Activated CD4-positive, alpha-beta memory T cell treated with anti-CD3 and anti-CD28 coated beads, Interleukin-2, amount 10 ng/mL, durations not matched to agents 7 days and 5 days (primary cell): ENCODE measurements at regions of chr6 and their contacts with region 1.

Region 1: DNA sequence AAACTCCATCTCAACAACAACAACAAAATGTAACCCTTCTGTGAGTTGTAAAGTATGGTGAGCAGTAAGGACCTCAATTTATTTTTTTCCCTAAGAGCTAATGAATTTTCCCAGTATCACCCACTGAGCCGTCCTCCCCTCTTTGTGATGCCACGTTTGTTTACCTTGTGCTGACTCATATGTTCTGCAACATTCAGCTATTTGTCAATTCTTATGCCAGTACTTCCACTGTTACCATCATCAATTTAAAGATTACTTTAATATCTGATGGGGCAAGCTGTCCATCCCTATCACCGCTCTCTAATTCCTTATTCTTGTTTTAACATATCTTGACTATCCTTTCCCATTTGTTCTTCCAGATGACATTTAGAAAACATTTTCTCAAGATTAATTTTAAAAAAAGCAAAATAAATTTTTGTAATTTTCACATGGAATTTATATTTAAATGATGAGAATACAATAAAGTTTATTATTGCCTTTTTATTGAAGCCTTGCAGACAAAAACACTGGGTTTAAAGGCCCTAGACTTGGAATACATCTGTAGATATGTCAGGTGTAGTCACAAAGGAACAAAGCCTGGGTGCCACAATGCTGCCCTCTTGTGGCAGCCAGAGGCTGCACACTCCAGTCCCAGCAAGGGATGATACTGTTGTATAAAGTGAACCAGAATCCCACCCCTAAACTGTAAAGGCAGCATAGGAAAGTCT is 37.4 kb downstream of the MAK start:
- DNase-seq: peak; percentile 72
- H3K4me3 Mint-ChIP-seq: no peak overlapping the region
- H3K27ac Mint-ChIP-seq: no peak overlapping the region
- H3K4me1 Mint-ChIP-seq: peaks cover 3% of the 10 kb centered on the region
- H3K27me3 Mint-ChIP-seq: no peaks in the 10 kb centered on the region

Region 2: DNA sequence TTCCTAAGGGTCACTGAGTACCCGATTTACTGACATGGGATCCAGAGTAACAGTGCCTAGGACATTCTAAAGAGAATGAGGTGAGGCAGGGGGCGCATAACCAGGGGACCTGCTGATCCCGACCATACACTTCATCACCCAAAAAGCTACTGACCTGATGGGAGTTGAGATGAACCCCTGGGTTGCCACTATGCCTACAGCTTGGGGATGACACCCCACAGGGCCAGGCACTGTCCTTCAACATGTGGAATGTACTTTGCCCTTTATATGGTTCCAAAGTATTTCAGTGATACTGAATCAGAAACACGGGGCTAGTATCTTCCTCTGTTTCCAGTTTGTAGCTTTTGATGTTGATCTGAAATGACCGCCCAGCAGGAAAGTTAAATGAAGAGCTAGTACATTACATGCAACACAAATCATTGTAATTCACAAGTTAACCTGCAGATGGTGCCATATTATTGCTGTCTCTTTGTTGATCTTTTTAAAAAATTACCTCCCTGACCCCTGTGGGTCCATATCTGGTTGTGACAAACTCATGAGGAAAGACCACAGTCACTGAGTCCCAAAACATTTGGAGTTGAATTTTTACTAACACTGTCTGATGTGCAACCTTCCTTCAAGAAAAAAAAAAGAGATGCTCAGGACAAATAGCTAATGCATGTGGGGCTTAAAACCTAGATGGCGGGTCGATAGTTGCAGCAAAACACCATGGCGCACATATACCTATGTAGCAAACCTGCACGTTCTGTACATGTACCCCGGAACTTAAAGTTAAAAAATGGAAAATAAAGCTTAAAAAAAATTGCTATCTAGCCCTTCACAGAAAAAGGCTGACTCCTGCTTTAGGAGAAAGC is 322.6 kb before region 1 on chr6:
- CTCF ChIA-PET with region 1: interaction called, 46 read pairs
- POLR2A ChIA-PET with region 1: no interaction called
- DNase-seq: no peak
- H3K4me3 Mint-ChIP-seq: no peak overlapping the region
- H3K27ac Mint-ChIP-seq: no peak overlapping the region
- H3K4me1 Mint-ChIP-seq: peaks cover 3% of the 10 kb centered on the region
- H3K27me3 Mint-ChIP-seq: peaks cover 10% of the 10 kb centered on the region

Region 3: DNA sequence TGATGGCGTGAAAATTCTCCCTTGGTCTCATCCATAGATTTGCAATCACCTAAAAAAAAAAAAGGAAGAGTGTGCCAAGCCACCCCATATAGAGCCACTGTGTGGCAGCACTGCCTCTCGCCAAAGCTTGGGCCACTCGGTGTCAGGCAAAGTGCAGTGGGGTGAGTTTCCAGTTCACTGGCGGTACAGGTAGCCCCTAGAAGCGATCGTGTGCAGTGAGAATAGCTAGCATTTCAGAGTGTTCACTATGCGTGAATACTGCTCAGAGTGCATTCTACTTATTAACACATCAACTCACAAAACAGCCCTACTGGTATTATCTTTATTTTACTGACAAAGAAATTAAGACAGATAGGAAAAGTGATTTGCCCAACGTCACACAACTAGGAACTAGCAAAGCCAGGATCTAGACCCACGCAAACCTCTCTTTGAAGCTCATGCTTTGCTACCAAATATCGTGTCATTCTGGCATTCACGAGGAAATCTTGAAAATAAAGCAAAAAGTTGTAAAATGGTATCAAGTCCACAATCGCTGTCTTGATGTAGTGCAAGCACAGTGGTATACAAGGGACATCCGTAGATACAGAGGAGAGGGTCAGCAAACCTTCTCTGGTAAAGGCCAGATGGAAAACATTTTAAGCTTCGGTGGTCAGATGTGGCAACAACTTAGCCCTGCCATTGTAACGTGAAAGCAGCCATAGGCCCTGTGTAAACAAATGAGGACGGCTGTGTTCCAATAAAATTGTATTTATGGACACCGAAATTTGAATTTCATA is 290.2 kb before region 1 on chr6:
- CTCF ChIA-PET with region 1: interaction called, 15 read pairs
- POLR2A ChIA-PET with region 1: no interaction called
- DNase-seq: peak; percentile 36
- H3K4me3 Mint-ChIP-seq: no peak overlapping the region
- H3K27ac Mint-ChIP-seq: no peak overlapping the region
- H3K4me1 Mint-ChIP-seq: peaks cover 3% of the 10 kb centered on the region
- H3K27me3 Mint-ChIP-seq: peaks cover 5% of the 10 kb centered on the region

Region 4: GRCh38 chr6:10880366-10880765 is 79.4 kb after region 1 on chr6:
- CTCF ChIA-PET with region 1: no interaction called
- POLR2A ChIA-PET with region 1: no interaction called
- DNase-seq: no peak
- H3K4me3 Mint-ChIP-seq: no peak overlapping the region
- H3K27ac Mint-ChIP-seq: no peak overlapping the region
- H3K4me1 Mint-ChIP-seq: peaks cover 8% of the 10 kb centered on the region
- H3K27me3 Mint-ChIP-seq: peaks cover 54% of the 10 kb centered on the region